Heart left ventricle (tissue), 16 donors: ENCODE measurements at regions of chrX and their contacts with region 1.

Region 1: GRCh38 chrX:101617211-101618191 is at the start of gene ARMCX6:
- DNase-seq: peak; percentile 79 to 87 (median 83)
- ATAC-seq: peak; percentile 86 to 96 (median 92)
- H3K4me3 ChIP-seq: peak within 1 kb of the TSS; percentile 38 to 85 (median 70)
- H3K27ac ChIP-seq: peak within 1 kb of the TSS in 11 of 12 donors; percentile 54 to 89 (median 79)
- H3K4me1 ChIP-seq: peaks cover 0 to 10% (median 2%) of the 10 kb centered on the region in 12 donors
- H3K27me3 ChIP-seq: no peaks in the 10 kb centered on the region
- CTCF ChIP-seq: peak in 11 of 12 donors; percentile 22 to 65 (median 42)
- POLR2A ChIP-seq: peak in 1 of 2 donors; percentile 17
- total RNA-seq, gene ARMCX6: 17.9 to 58.7 (median 33.2) TPM

Region 2: DNA sequence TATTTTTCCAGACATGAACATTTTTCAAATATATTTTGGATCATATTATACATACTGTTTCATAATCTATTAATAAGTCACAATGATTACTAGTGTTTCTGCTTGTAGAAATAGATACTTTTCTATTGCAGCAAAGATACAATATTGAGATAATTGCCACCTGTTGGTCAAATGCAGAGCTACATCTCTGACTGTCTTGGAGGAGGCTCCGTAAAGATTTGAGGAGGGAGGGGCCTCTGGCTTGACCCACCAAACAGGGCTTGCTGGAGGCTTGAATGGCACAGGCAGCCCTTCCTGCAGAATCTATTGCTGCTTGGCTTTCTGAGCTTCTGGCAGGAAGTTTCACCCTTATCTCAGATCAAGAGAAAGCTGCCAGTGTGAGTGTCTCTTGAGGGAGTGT is 141.5 kb after region 1 on chrX:
- intact Hi-C with region 1: loop called in 2 of 10 experiments (anchors 5 kb)
- DNase-seq: peak in 3 of 5 donors; percentile 7 to 29 (median 15)
- ATAC-seq: peak in 1 of 4 donors; percentile 65
- H3K4me3 ChIP-seq: no peak overlapping the region
- H3K27ac ChIP-seq: no peak overlapping the region
- H3K4me1 ChIP-seq: no peaks in the 10 kb centered on the region
- H3K27me3 ChIP-seq: peaks cover 0 to 39% (median 0%) of the 10 kb centered on the region in 9 donors
- CTCF ChIP-seq: peak; percentile 20 to 53 (median 38)
- POLR2A ChIP-seq: no peak

Region 3: GRCh38 chrX:101764538-101764937 is 147.0 kb after region 1 on chrX:
- intact Hi-C with region 1: loop called in 2 of 10 experiments (anchors 5 kb)
- DNase-seq: no peak
- ATAC-seq: no peak
- H3K4me3 ChIP-seq: no peak overlapping the region
- H3K27ac ChIP-seq: no peak overlapping the region
- H3K4me1 ChIP-seq: no peaks in the 10 kb centered on the region
- H3K27me3 ChIP-seq: peaks cover 0 to 22% (median 0%) of the 10 kb centered on the region in 9 donors
- CTCF ChIP-seq: no peak
- POLR2A ChIP-seq: no peak

Region 4: DNA sequence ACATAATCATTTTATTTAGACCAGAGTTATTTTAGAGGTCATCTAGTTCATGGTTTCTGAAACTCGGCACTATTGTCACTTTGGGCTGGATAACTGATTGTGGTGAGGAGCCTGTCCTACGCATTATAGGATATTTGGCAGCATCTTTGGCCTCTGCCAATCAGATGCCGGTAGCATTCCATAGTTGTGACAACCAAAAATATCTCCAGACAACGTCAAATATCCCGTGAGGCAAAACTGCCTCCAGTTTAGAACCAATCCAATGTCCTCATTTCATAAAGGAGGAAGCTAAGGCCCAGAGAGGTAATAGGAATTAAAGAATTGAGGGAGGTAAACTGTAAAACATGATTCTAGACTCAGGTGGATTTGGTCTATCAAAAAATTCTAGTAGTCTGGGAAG is 308.2 kb after region 1 on chrX:
- intact Hi-C with region 1: loop called in 1 of 10 experiments (anchors 10 kb)
- DNase-seq: no peak
- ATAC-seq: peak in 3 of 4 donors; percentile 53 to 77 (median 61)
- H3K4me3 ChIP-seq: no peak overlapping the region
- H3K27ac ChIP-seq: peak overlapping the region in 1 of 12 donors; percentile 50
- H3K4me1 ChIP-seq: peaks cover 0 to 8% (median 0%) of the 10 kb centered on the region in 12 donors
- H3K27me3 ChIP-seq: peaks cover 0 to 3% (median 0%) of the 10 kb centered on the region in 9 donors
- CTCF ChIP-seq: no peak
- POLR2A ChIP-seq: no peak